Esophagus muscularis mucosa (tissue), 4 donors: ENCODE measurements at regions of chr11 and their contacts with region 1.

Region 1: GRCh38 chr11:28969832-28970231 is 861.6 kb downstream of the METTL15 start:
- DNase-seq: no peak
- H3K4me3 ChIP-seq: no peak overlapping the region
- H3K27ac ChIP-seq: no peak overlapping the region
- H3K4me1 ChIP-seq: no peaks in the 10 kb centered on the region
- H3K27me3 ChIP-seq: no peaks in the 10 kb centered on the region
- CTCF ChIP-seq: no peak
- EP300 ChIP-seq: no peak
- POLR2A ChIP-seq: no peak

Region 2: GRCh38 chr11:29159552-29160465 is 190.0 kb after region 1 on chr11:
- intact Hi-C with region 1: loop called (anchors 10 kb)
- DNase-seq: no peak
- H3K4me3 ChIP-seq: no peak overlapping the region
- H3K27ac ChIP-seq: no peak overlapping the region
- H3K4me1 ChIP-seq: no peaks in the 10 kb centered on the region
- H3K27me3 ChIP-seq: no peaks in the 10 kb centered on the region
- CTCF ChIP-seq: peak; percentile 48 to 68 (median 49)
- EP300 ChIP-seq: no peak
- POLR2A ChIP-seq: no peak